ENCODE measurements at regions of chr3 and their contacts with region 1.

Region 1: GRCh38 chr3:46629551-46630517 is 17.5 kb downstream of the FAM240A start:
- DNase-seq: peak; percentile 65 to 90 (median 75)
- ATAC-seq: peak; percentile 95
- H3K4me3 ChIP-seq: peak overlapping the region; percentile 46
- H3K4me3 Mint-ChIP-seq: peak overlapping the region; percentile 76
- H3K27ac ChIP-seq: peak overlapping the region in 1 of 2 donors; percentile 10
- H3K27ac Mint-ChIP-seq: peak overlapping the region; percentile 89
- H3K4me1 ChIP-seq: peaks cover 20% of the 10 kb centered on the region
- H3K4me1 Mint-ChIP-seq: peaks cover 34% of the 10 kb centered on the region
- H3K27me3 ChIP-seq: no peaks in the 10 kb centered on the region
- H3K27me3 Mint-ChIP-seq: peaks cover 3% of the 10 kb centered on the region
- CTCF ChIP-seq: peak; percentile 100

Region 2: DNA sequence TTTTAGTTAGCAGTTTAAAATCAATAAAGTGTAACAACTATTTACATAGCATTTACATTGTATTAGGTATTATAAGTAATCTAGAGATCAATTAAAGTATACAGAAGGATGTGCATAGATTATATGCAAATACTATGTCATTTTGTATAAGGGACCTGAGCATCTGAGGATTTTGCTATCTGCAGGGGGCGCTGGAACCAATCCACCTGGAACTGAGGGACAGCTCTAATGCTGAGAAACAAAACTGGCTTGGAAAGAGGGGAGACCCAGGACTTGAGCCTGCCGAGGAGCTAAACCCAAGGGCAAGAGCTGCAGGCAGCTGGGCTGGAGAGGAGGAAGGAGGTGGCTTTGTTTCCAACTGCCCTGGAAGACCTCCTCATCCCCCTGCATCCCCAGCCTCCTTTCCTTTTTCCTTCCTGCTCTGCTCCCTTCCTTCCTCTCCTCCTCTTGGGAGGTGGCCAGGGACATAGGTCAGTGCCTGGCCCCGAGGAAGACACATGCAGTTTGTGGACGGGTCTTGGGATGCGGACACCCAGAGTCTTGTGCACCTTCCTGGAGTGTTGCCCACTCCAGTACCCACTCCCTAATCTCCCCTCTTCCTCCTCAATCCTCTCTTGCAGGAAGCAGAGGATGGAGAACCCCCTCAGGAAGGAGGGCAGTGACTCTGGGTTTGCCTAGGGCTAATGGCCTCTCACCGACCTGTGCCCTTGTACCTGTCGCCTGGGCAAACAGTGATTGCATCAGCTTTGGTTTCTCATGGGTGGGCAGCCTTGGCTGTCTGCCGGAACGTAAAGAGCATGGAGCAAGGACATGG is 132.9 kb before region 1 on chr3:
- CTCF ChIA-PET with region 1: interaction called, 122 read pairs
- POLR2A ChIA-PET with region 1: no interaction called
- intact Hi-C with region 1: no loop called
- DNase-seq: peak; percentile 34 to 85 (median 56)
- ATAC-seq: peak; percentile 67
- H3K4me3 ChIP-seq: no peak overlapping the region
- H3K4me3 Mint-ChIP-seq: no peak overlapping the region
- H3K27ac ChIP-seq: no peak overlapping the region
- H3K27ac Mint-ChIP-seq: no peak overlapping the region
- H3K4me1 ChIP-seq: peaks cover 11% of the 10 kb centered on the region
- H3K4me1 Mint-ChIP-seq: peaks cover 32% of the 10 kb centered on the region
- H3K27me3 ChIP-seq: no peaks in the 10 kb centered on the region
- H3K27me3 Mint-ChIP-seq: no peaks in the 10 kb centered on the region
- CTCF ChIP-seq: peak; percentile 65

Region 3: GRCh38 chr3:46565607-46566035 is 64.2 kb before region 1 on chr3:
- CTCF ChIA-PET with region 1: interaction called, 4 read pairs
- POLR2A ChIA-PET with region 1: no interaction called
- intact Hi-C with region 1: loop called in 1 of 2 experiments (anchors 5 kb)
- DNase-seq: no peak
- ATAC-seq: peak; percentile 35
- H3K4me3 ChIP-seq: peak overlapping the region; percentile 52
- H3K4me3 Mint-ChIP-seq: peak overlapping the region; percentile 88
- H3K27ac ChIP-seq: no peak overlapping the region
- H3K27ac Mint-ChIP-seq: peak overlapping the region; percentile 15
- H3K4me1 ChIP-seq: peaks cover 15% of the 10 kb centered on the region
- H3K4me1 Mint-ChIP-seq: peaks cover 15% of the 10 kb centered on the region
- H3K27me3 ChIP-seq: peaks cover 8 to 20% of the 10 kb centered on the region in 2 experiments
- H3K27me3 Mint-ChIP-seq: peaks cover 23% of the 10 kb centered on the region
- CTCF ChIP-seq: no peak

Region 4: DNA sequence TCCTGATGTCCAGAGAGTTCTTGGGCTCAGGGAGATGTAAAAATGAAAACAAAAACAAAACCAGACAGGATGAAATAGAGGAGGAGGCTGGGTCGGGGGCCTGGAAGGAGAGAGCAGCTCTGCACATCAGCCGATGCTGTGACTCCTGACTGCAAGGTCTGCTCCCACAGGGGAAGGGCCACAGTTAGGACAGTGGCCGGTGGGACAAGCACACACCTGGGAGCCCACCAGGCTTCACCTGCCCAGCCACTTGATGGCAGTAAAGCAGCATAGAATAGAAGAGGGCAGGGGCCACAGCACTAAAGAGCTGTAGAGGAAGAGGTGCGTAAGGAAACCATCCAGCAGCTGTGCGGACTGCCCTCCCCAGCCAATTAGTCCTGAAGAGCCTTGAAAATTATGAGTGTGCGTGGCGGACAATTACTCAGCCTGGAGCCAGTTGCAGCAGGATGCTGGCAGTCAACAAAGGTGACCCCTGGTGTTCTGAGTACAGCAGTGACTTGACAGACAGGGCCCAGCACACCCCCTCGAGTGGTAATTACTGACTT is 33.8 kb after region 1 on chr3:
- CTCF ChIA-PET with region 1: no interaction called
- POLR2A ChIA-PET with region 1: no interaction called
- intact Hi-C with region 1: no loop called
- DNase-seq: peak in 5 of 14 experiments; percentile 15 to 45 (median 17)
- ATAC-seq: no peak
- H3K4me3 ChIP-seq: no peak overlapping the region
- H3K4me3 Mint-ChIP-seq: no peak overlapping the region
- H3K27ac ChIP-seq: no peak overlapping the region
- H3K27ac Mint-ChIP-seq: no peak overlapping the region
- H3K4me1 ChIP-seq: no peaks in the 10 kb centered on the region
- H3K4me1 Mint-ChIP-seq: no peaks in the 10 kb centered on the region
- H3K27me3 ChIP-seq: no peaks in the 10 kb centered on the region
- H3K27me3 Mint-ChIP-seq: peaks cover 4% of the 10 kb centered on the region
- CTCF ChIP-seq: no peak

Region 5: DNA sequence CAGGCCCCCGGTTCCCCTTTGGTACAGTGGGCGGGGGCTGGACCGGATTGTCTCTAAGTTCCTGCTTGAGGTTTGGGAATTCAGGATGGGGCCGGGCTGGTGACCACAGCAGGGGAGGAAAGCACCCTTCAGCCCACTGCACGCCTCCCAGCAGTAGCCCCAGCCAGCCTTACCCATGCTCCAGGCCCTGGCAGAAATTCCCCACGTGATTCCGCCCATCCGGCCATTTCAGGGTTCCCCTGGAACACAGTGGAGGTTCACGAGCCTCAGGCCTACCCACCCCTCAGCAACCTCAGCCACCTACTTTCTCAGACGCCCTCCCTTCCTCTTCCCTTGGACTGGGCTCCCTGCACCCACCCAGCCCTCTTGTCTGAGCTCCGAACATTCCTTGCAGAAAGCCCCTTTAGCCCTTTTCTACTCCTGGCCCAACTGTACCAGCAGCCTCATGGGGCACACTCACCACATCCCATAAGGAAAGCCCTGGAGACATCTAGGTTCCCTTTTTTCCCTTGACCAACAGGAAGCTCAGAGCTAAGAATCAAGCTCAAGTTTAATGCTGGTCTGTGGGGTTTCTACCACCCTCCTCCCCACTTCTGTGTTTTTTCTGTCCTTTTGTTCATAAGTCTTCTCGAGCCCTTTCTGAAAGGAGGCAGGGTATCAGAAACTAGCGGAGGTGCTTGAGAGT is 52.2 kb after region 1 on chr3:
- CTCF ChIA-PET with region 1: no interaction called
- POLR2A ChIA-PET with region 1: no interaction called
- intact Hi-C with region 1: no loop called
- DNase-seq: no peak
- ATAC-seq: no peak
- H3K4me3 ChIP-seq: no peak overlapping the region
- H3K4me3 Mint-ChIP-seq: no peak overlapping the region
- H3K27ac ChIP-seq: no peak overlapping the region
- H3K27ac Mint-ChIP-seq: no peak overlapping the region
- H3K4me1 ChIP-seq: no peaks in the 10 kb centered on the region
- H3K4me1 Mint-ChIP-seq: no peaks in the 10 kb centered on the region
- H3K27me3 ChIP-seq: no peaks in the 10 kb centered on the region
- H3K27me3 Mint-ChIP-seq: no peaks in the 10 kb centered on the region
- CTCF ChIP-seq: no peak

Region 6: GRCh38 chr3:46700772-46701171 is 70.9 kb after region 1 on chr3:
- CTCF ChIA-PET with region 1: no interaction called
- POLR2A ChIA-PET with region 1: no interaction called
- intact Hi-C with region 1: no loop called
- DNase-seq: no peak
- ATAC-seq: no peak
- H3K4me3 ChIP-seq: no peak overlapping the region
- H3K4me3 Mint-ChIP-seq: no peak overlapping the region
- H3K27ac ChIP-seq: no peak overlapping the region
- H3K27ac Mint-ChIP-seq: no peak overlapping the region
- H3K4me1 ChIP-seq: peaks cover 53% of the 10 kb centered on the region
- H3K4me1 Mint-ChIP-seq: peaks cover 55% of the 10 kb centered on the region
- H3K27me3 ChIP-seq: peaks cover 0 to 9% of the 10 kb centered on the region in 2 experiments
- H3K27me3 Mint-ChIP-seq: no peaks in the 10 kb centered on the region
- CTCF ChIP-seq: no peak